Posterior vena cava (tissue), 2 donors: ENCODE measurements at regions of chr7 and their contacts with region 1.

Region 1: GRCh38 chr7:27647052-27647451 is 15.6 kb downstream of the HIBADH start:
- DNase-seq: no peak

Region 2: GRCh38 chr7:25686493-25686892 is 1960.6 kb before region 1 on chr7:
- intact Hi-C with region 1: loop called in 1 of 2 experiments (anchors 5 kb)
- DNase-seq: no peak

Region 3: GRCh38 chr7:27605689-27606269 is 41.3 kb before region 1 on chr7:
- intact Hi-C with region 1: no loop called
- DNase-seq: no peak

Region 4: DNA sequence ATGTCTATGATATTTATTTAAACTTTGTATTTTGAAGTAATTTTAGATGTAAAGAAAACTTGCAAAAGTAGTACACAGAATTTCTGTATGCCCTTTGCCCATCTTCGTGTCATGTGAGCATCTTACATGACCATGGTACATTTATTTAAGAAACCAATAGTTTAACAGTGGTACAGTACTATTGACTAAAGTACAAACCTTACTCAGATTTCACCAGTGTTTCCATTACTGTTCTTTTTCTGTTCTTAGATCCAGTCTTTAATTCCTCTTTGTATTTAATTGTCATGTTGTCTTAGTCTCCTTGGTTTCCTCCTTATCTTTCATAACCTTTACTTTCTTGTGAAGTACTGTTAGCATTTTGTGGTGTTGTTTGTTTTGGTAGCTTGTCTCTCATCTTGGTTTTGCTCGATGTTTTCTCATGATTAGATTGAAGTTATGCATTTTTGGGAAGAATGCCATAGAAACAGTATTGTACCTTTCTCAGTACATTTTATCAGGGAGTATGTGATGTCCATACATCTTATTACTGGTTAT is 117.0 kb after region 1 on chr7:
- intact Hi-C with region 1: no loop called
- DNase-seq: no peak